ENCODE measurements at regions of chr12 and their contacts with region 1.

Region 1: GRCh38 chr12:2783936-2784600 is 10.7 kb upstream of the FKBP4 start:
- DNase-seq: peak; percentile 54
- H3K4me3 Mint-ChIP-seq: no peak overlapping the region
- H3K27ac Mint-ChIP-seq: no peak overlapping the region
- H3K4me1 Mint-ChIP-seq: peaks cover 6% of the 10 kb centered on the region
- H3K27me3 Mint-ChIP-seq: peaks cover 80% of the 10 kb centered on the region
- CTCF ChIP-seq: peak; percentile 83

Region 2: DNA sequence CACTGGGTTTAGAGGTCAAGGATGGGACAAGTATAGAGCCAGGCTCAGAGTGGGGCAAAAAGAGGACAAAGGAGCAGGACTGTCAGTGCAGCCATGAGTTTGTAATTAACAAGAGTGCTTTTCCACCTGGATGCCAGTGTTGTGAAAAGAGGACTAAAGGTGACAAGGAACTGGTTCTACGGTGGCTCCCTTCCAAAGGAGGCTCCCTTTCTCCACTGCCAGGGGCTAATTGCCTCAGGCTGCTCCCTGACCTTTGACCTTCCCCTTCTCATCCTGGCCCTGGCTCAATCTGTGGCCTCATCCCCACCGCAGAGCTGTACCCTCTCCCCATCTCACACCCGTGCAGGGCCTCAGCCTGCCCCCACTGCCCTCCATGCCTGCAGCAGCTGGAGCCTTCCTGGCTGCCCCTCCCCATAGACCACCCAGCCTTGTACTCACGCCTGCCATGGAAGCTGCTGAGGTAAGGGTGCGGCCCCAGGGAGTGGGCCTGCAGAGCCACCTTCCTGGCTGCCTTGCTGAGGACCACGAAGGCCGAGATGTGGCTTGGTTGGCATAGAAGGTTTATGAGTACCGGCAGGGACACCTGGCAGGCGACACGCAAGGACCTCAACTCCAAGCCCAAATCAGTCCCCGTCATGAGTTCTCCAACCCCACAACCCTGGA is 14.1 kb before region 1 on chr12:
- CTCF ChIA-PET with region 1: interaction called, 25 read pairs
- POLR2A ChIA-PET with region 1: no interaction called
- intact Hi-C with region 1: no loop called
- DNase-seq: no peak
- H3K4me3 Mint-ChIP-seq: no peak overlapping the region
- H3K27ac Mint-ChIP-seq: no peak overlapping the region
- H3K4me1 Mint-ChIP-seq: no peaks in the 10 kb centered on the region
- H3K27me3 Mint-ChIP-seq: peaks cover 74% of the 10 kb centered on the region
- CTCF ChIP-seq: no peak

Region 3: GRCh38 chr12:3041558-3042164 is 257.6 kb after region 1 on chr12:
- CTCF ChIA-PET with region 1: no interaction called
- POLR2A ChIA-PET with region 1: no interaction called
- intact Hi-C with region 1: no loop called
- DNase-seq: peak; percentile 87
- H3K4me3 Mint-ChIP-seq: no peak overlapping the region
- H3K27ac Mint-ChIP-seq: no peak overlapping the region
- H3K4me1 Mint-ChIP-seq: peaks cover 9% of the 10 kb centered on the region
- H3K27me3 Mint-ChIP-seq: no peaks in the 10 kb centered on the region
- CTCF ChIP-seq: peak; percentile 50